ENCODE measurements at regions of chr17 and their contacts with region 1.

Region 1: DNA sequence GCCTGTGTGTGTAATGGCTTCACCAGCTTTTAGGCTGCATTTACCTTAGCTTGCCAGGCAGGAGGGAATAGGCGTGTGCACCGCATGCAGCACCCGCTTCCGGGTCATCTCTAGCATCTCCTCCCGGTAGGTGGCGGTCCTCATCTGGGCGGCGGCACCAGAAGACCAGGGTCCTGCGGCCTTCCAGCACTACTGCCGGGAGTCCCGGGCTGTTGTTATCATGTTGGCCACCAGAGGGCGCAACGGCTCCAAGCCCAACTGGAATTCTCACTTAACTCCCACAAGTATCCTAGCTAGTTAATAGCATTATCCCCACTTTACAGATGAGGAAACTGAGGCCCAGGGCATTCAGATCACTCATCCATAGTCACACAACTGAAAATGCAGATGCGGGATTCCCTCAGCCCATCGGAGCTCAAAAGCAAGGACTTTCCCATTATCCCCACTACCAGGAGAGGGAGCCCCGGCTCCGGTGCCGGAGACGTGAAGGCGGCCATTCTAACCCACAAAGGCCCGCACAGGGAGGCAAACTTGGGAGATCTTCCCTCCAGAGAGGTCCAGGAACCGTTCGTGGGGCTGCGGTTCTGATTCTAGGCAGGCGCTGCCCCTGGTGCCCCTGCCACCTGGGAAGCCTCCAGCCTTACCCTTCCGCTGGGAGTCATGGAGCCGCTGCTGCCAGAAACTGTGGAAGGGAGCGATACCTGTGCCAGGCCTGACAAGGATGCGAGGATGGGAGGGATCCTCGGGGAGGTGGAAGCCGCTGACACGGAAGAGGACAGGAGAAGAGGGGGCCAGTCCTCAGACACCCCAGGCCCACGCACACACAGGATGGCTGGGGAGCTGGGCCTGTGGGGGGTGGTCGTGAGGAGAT is 23.9 kb downstream of the LGALS9 start:
- DNase-seq: peak; percentile 93
- H3K4me3 ChIP-seq: peak overlapping the region in 1 of 2 experiments; percentile 43; a peak in 1 of 4 replicates
- H3K27ac ChIP-seq: no peak overlapping the region
- H3K4me1 ChIP-seq: no peaks in the 10 kb centered on the region; a peak in 1 of 4 replicates
- H3K27me3 ChIP-seq: no peaks in the 10 kb centered on the region
- CTCF ChIP-seq: peak; percentile 93
- EP300 ChIP-seq: no peak
- RAD21 ChIP-seq: peak; percentile 68

Region 2: GRCh38 chr17:27455914-27456680 is 198.8 kb before region 1 on chr17 and contains the start of gene KSR1:
- CTCF ChIA-PET with region 1: interaction called, 10 read pairs
- POLR2A ChIA-PET with region 1: interaction called, 3 read pairs
- DNase-seq: peak; percentile 93
- H3K4me3 ChIP-seq: peak within 1 kb of the TSS; percentile 73 to 80
- H3K27ac ChIP-seq: peak within 1 kb of the TSS in 1 of 2 experiments; percentile 63; a peak in 1 of 4 replicates
- H3K4me1 ChIP-seq: peaks cover 8 to 41% of the 10 kb centered on the region in 2 experiments
- H3K27me3 ChIP-seq: no peaks in the 10 kb centered on the region
- CTCF ChIP-seq: peak; percentile 58
- EP300 ChIP-seq: no peak
- RAD21 ChIP-seq: peak; percentile 71
- polyA plus RNA-seq, gene KSR1: 7.5 and 7.9 TPM in 2 replicates

Region 3: DNA sequence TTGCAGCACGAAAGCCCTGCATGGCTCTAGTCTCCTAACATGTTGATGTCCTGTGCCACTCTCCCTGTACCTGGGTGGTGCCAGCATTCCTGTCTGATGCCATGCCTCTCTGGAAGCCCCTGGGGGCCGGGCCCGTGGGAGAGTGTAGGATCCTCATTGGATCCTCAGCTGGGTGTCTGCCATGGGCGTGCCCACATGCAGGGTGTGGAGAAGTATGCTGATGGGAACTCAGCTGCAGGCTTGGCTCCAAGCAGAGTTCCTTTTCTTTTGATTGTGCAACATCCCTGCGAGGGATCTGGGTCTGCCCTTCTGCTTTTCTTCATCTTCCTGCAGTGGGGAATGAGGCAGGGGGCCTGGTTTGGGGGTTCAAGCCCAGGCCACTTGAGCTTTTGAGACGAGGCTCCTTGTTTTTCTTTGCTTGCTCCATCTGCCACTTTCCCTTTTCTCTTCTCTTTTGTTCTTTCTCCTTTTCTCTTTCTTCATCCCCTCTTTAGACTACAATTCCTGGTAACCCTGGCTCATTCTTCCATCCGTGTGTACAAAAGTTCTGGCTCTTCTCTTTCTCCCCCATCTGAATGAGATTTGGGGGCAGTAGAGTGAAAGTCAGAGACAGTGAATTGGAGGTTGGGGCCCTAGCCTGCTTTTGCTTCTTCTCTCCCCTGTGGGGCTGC is 165.7 kb before region 1 on chr17:
- CTCF ChIA-PET with region 1: no interaction called
- POLR2A ChIA-PET with region 1: no interaction called
- DNase-seq: no peak
- H3K4me3 ChIP-seq: no peak overlapping the region
- H3K27ac ChIP-seq: no peak overlapping the region
- H3K4me1 ChIP-seq: no peaks in the 10 kb centered on the region; a peak in 2 of 4 replicates
- H3K27me3 ChIP-seq: no peaks in the 10 kb centered on the region
- CTCF ChIP-seq: no peak
- EP300 ChIP-seq: no peak
- RAD21 ChIP-seq: no peak

Region 4: DNA sequence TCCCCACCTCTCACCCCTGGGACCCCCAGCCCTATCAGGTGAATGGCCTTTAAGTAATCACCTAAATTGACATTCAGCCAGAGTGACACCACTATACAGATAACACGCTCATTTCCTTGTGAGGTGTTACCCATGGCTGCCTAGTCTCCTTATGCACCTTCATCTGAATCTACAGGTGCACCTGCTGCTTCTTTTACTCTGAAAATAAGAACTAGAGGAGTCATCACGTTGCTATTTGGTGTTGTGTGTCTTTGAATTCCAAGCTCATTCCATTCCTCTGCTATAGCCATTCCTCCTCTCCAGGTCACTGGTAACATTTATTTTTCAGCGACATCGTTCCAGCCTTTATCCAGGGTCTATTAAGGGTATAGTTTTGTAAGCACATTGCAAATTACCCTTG is 14.1 kb before region 1 on chr17:
- CTCF ChIA-PET with region 1: interaction called, 18 read pairs
- POLR2A ChIA-PET with region 1: no interaction called
- DNase-seq: no peak
- H3K4me3 ChIP-seq: no peak overlapping the region
- H3K27ac ChIP-seq: no peak overlapping the region
- H3K4me1 ChIP-seq: no peaks in the 10 kb centered on the region
- H3K27me3 ChIP-seq: no peaks in the 10 kb centered on the region
- CTCF ChIP-seq: no peak
- EP300 ChIP-seq: no peak
- RAD21 ChIP-seq: no peak

Region 5: DNA sequence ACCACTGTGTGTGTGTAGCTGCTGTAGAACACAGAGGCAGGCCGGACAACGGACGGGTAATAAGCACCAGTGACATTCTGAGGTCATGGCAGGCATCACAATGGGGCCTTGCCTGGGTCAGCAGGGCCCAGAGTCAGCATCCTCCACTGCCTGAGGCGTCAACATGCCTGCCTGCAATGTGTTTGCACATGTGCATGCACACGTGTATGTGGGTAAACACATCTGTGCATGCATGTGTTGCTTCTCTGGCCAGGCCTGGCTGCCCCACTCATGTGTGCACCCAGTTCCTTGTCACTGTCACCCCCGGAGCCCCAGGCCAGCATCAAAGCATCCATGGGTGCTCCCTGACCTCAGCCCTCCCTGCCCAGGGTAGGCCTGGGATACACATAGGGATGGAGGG is 19.4 kb after region 1 on chr17:
- CTCF ChIA-PET with region 1: interaction called, 15 read pairs
- POLR2A ChIA-PET with region 1: no interaction called
- DNase-seq: no peak
- H3K4me3 ChIP-seq: no peak overlapping the region
- H3K27ac ChIP-seq: no peak overlapping the region
- H3K4me1 ChIP-seq: no peaks in the 10 kb centered on the region
- H3K27me3 ChIP-seq: no peaks in the 10 kb centered on the region
- CTCF ChIP-seq: no peak
- EP300 ChIP-seq: no peak
- RAD21 ChIP-seq: no peak

Region 6: DNA sequence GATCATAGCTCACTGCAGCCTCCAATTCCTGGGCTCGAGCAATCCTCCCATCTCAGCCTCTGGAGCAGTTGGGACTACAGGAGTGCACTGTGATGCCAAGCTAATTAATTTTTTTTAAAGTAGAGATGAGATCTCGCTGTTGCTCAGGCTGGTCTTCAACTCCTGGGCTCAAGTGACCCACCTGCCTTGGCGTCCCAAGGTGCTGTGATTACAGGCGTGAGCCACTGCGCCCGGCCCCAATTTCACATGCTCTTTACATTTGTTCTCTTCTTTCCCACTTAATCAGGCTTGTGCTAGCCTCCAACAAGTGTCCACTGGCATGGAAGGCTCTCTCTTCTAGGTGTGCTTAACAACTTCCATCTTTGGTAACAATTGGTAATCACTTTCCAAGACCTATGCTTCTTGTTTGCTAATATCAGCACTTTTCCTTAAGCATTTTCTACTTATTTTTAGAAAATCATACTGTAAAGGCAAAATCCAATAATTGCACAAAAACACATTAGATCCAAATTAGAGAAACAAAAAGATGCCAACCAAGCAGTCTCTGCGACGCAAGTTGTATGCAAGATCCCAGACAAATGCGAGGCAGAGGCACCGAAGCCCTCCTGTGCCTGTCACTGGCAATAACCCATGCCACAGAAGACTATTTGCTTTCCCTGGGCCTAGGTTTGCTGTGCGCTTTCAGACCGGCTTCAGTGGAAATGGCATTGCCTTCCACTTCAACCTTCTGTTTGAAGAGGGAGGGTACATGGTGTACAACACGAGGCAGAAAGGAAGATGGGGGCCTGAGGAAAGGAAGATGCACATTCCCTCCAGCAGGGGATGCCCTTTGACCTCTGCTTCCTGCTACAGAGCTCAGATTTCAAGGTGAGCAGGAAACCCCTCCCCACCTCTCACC is 92.8 kb after region 1 on chr17:
- CTCF ChIA-PET with region 1: interaction called, 12 read pairs
- POLR2A ChIA-PET with region 1: no interaction called
- DNase-seq: no peak
- H3K4me3 ChIP-seq: no peak overlapping the region; a peak in 1 of 4 replicates
- H3K27ac ChIP-seq: no peak overlapping the region
- H3K4me1 ChIP-seq: no peaks in the 10 kb centered on the region
- H3K27me3 ChIP-seq: no peaks in the 10 kb centered on the region; the same call in 1 of the 2 replicates
- CTCF ChIP-seq: peak; percentile 34; the same call in 1 of the 2 replicates
- EP300 ChIP-seq: no peak
- RAD21 ChIP-seq: no peak